WTC11 (cell line): ENCODE measurements at regions of chr7 and their contacts with region 1.

Region 1: GRCh38 chr7:2451171-2452073 is 24.8 kb downstream of the GRIFIN start:
- DNase-seq: peak; percentile 89
- ATAC-seq: peak; percentile 95
- H3K4me3 Mint-ChIP-seq: no peak overlapping the region
- H3K27ac Mint-ChIP-seq: peak overlapping the region; percentile 70; the same call in 1 of the 2 replicates
- H3K4me1 Mint-ChIP-seq: peaks cover 4% of the 10 kb centered on the region
- H3K27me3 Mint-ChIP-seq: no peaks in the 10 kb centered on the region
- CTCF ChIP-seq: peak; percentile 81

Region 2: DNA sequence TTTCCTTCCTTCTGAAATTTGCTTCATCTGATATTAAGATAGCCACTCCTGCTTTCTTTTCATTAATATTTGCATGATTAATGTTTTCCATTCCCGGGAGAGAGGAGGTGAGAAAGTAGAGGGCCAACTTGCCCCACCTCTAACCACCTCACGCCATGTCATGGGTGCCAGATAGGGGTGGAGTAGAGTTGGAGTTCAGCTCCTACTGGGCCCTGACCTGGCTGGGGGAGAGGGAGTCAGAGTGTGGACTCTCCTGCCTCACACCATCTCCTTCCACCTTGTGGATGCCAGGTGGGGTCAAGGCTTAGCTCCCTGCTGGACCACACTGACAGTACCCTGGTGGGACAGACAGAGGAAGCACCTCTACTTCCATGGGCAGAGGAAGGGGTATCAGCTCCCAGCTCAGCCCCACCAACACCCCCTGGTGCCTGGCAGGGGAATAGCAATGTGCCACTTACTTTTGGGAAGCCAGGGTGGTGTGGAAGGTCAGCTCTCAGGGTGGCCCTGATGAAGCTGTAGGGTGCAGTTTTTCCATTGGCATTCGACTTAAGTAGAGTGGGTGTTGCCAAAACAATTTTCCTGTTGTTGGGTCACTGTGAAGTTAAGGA is 20.1 kb before region 1 on chr7:
- CTCF ChIA-PET with region 1: interaction called, 15 read pairs
- POLR2A ChIA-PET with region 1: no interaction called
- DNase-seq: peak; percentile 66
- ATAC-seq: peak; percentile 97
- H3K4me3 Mint-ChIP-seq: no peak overlapping the region
- H3K27ac Mint-ChIP-seq: no peak overlapping the region
- H3K4me1 Mint-ChIP-seq: no peaks in the 10 kb centered on the region
- H3K27me3 Mint-ChIP-seq: no peaks in the 10 kb centered on the region
- CTCF ChIP-seq: peak; percentile 74

Region 3: DNA sequence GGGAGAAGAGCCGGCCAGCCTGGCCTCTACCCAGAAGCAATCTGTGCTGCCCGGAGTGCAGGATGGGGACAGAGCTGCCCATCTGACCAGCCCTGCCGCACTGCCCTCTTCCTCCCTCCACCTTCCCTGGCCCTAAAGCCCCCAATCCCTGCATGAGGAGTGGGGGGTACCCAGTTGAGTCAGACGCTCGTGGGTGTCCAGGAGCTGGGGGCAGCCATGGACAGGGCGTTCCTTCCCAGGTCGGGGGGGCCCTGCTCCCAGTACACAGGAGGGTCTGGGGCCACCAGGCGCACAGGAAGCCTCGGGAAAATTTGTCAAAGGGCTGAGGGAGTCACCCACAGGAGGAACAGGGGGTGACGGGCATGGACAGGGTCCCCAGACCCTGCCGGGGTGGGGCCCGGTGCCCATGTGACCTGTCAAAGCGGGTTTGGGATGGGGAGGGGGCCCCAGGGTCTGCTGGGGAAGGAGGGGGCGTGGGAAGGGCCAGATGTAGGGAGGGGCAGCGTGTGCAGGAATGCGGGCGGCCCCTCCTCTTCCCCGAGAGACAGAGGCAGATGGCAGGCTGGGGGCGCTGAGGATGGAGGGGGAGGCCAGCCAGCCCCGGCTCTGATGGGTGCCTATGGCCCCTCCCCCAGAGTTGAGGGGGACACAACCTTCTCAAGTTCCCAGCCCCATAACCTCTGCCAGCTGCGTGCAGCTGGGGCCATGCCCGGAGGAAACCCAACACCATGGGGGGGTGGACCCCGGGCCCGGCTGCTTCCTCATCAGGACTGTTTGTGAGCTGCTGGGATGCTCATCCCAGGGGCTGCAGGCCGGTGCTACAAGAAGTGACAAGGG is 46.3 kb after region 1 on chr7:
- CTCF ChIA-PET with region 1: interaction called, 16 read pairs
- POLR2A ChIA-PET with region 1: no interaction called
- DNase-seq: no peak
- ATAC-seq: peak; percentile 10
- H3K4me3 Mint-ChIP-seq: no peak overlapping the region
- H3K27ac Mint-ChIP-seq: peak overlapping the region; percentile 36; the same call in 1 of the 2 replicates
- H3K4me1 Mint-ChIP-seq: peaks cover 42% of the 10 kb centered on the region
- H3K27me3 Mint-ChIP-seq: no peaks in the 10 kb centered on the region; the same call in 1 of the 2 replicates
- CTCF ChIP-seq: no peak

Region 4: DNA sequence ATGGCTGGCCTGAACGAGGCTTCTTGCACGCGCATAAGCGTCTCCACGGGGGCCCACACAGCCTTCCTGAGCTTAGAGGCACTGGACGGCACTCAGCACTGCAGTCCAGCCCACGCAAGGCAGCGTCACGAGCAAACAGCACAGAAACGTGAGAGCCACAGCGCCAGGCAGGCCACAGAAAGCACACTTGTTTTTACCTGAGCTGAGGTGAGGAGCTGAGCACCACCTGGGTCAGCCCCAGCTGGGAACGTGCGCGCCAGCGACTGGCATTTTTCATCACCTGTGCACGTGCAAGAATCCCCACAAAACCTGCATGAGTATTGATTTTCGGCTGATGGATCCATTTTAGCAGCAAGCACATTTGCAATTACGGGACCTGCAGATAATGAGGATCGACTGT is 134.0 kb after region 1 on chr7:
- CTCF ChIA-PET with region 1: interaction called, 11 read pairs
- POLR2A ChIA-PET with region 1: interaction called, 3 read pairs
- DNase-seq: no peak
- ATAC-seq: no peak
- H3K4me3 Mint-ChIP-seq: no peak overlapping the region
- H3K27ac Mint-ChIP-seq: peak overlapping the region; percentile 85
- H3K4me1 Mint-ChIP-seq: peaks cover 16% of the 10 kb centered on the region
- H3K27me3 Mint-ChIP-seq: no peaks in the 10 kb centered on the region
- CTCF ChIP-seq: no peak

Region 5: DNA sequence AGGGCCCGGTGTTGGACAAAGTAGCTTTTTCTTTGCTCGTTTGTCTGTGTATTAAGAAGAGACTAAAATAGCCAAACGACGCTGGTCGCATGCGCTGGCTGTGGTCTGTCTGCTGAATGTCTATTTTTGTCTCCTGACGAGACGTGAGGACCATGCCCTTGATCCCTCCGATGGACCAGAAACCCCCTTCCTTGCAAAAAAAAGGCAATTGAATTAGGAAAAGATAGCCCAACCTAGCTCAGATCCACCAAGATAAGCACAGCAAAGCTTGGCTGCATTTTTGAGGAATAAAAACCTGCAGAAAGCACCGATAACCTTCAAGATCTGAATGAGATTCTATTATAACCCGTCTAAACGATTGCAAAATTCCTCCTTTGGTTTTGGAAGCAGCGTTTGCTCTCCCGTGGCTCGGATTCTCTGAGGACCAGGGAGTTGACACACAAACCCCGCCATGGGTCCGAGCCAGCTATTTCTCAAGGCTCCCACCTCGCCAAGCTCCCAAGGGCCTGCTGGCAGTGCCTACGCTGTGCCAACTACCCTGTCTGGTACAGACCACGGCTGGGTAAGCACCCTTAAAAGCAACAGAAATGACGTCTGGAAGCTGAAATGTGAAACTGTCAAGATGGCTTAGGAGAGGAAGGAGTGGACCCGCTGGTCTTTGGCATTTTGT is 162.6 kb after region 1 on chr7:
- CTCF ChIA-PET with region 1: interaction called, 18 read pairs
- POLR2A ChIA-PET with region 1: interaction called, 3 read pairs
- DNase-seq: no peak
- ATAC-seq: no peak
- H3K4me3 Mint-ChIP-seq: no peak overlapping the region
- H3K27ac Mint-ChIP-seq: no peak overlapping the region
- H3K4me1 Mint-ChIP-seq: peaks cover 30% of the 10 kb centered on the region
- H3K27me3 Mint-ChIP-seq: no peaks in the 10 kb centered on the region; the same call in 1 of the 2 replicates
- CTCF ChIP-seq: no peak

Region 6: DNA sequence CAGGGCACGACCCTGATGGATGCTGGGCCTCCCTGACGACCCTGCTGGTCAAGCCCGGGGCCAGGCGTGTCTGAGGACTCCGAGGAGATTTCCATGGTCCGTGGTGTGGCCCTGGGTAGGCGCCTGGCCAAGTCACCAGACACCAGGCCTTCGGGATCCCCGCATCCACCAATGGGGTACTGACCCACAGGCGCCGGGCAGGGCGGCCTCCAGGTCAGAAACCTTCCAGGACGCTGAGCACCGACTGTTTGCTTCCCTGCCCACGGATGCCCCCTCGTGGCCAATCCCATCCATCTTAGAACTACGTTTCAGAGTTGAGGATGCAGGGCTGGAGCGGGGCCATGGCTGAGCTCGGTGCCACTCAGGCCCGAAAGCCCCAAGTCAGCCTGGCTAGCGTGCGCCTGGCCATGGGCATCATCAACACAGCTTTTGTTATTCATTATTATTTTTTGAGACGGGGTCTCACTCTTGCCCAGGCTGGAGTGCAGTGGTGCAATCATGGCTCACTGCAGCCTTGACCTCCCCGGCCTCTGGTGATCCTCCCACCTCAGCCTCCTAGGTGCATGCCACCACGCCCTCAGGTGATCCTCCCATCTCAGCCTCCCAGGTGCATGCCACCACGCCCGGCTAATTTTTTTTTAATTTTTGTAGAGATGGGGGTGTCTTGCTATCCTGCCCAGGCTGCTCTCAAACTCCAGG is 229.5 kb after region 1 on chr7:
- CTCF ChIA-PET with region 1: interaction called, 52 read pairs
- POLR2A ChIA-PET with region 1: no interaction called
- DNase-seq: peak; percentile 89
- ATAC-seq: peak; percentile 90
- H3K4me3 Mint-ChIP-seq: no peak overlapping the region
- H3K27ac Mint-ChIP-seq: no peak overlapping the region
- H3K4me1 Mint-ChIP-seq: no peaks in the 10 kb centered on the region
- H3K27me3 Mint-ChIP-seq: peaks cover 2% of the 10 kb centered on the region
- CTCF ChIP-seq: peak; percentile 69

Region 7: GRCh38 chr7:2709553-2710285 is 258.3 kb after region 1 on chr7:
- CTCF ChIA-PET with region 1: interaction called, 37 read pairs
- POLR2A ChIA-PET with region 1: no interaction called
- DNase-seq: peak; percentile 91
- ATAC-seq: peak; percentile 94
- H3K4me3 Mint-ChIP-seq: no peak overlapping the region
- H3K27ac Mint-ChIP-seq: no peak overlapping the region
- H3K4me1 Mint-ChIP-seq: peaks cover 8% of the 10 kb centered on the region
- H3K27me3 Mint-ChIP-seq: no peaks in the 10 kb centered on the region
- CTCF ChIP-seq: peak; percentile 93